ENCODE measurements at regions of chr21 and their contacts with region 1.

Region 1: DNA sequence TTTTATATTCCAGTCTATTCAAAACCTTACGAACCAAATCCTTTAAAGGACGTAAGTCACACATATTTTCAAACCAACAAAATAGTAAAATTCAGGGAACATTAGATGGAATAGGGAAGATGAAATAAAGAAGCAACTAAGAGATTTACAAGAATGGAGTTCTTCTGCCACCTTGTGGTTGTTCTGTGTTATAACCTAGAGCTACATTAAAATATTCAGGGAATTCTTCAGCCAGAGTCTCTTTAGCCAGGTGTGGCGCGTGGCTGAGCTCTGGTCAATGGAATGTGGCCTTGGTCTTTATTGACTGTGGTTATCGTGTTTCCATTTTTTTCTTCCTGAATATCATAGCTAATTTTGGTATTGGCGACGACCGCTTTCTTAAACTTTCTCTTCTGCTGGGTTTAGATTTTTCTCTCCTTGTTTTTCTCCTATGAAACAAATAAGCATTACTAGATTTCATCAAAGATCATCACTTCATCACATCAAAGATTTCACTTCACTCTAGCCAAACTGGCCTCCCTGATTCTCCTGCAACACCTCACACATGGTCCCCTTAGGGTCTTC is 221.3 kb downstream of the MRPL39 start:
- DNase-seq: no peak
- H3K4me3 ChIP-seq: no peak overlapping the region
- H3K27me3 ChIP-seq: no peaks in the 10 kb centered on the region
- CTCF ChIP-seq: peak; percentile 64

Region 2: DNA sequence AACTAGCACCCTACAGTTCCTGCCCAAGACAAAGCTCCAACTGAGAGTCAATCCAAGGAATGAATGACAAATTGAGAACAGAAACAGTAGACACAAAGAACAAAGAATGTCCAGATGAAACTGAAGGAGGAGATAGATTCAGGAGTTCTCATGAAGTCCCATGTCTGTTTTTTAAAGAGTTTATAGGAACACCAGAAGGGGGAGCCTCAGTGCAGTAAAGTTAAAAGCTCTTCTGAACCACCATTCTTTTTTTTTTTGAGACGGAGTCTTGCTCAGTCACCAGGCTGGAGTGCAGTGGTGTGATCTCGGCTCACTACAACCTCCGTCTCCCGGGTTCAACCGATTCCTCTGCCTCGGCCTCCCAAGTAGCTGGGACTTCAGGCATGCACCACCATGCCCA is 102.3 kb before region 1 on chr21:
- CTCF ChIA-PET with region 1: interaction called, 11 read pairs
- POLR2A ChIA-PET with region 1: no interaction called
- DNase-seq: peak; percentile 8
- H3K4me3 ChIP-seq: no peak overlapping the region
- H3K27me3 ChIP-seq: no peaks in the 10 kb centered on the region
- CTCF ChIP-seq: peak; percentile 54

Region 3: GRCh38 chr21:25342816-25343215 is 43.2 kb before region 1 on chr21:
- CTCF ChIA-PET with region 1: interaction called, 10 read pairs
- POLR2A ChIA-PET with region 1: no interaction called
- DNase-seq: peak; percentile 34
- H3K4me3 ChIP-seq: no peak overlapping the region
- H3K27me3 ChIP-seq: no peaks in the 10 kb centered on the region
- CTCF ChIP-seq: no peak

Region 4: GRCh38 chr21:25350056-25350455 is 35.9 kb before region 1 on chr21:
- CTCF ChIA-PET with region 1: interaction called, 29 read pairs
- POLR2A ChIA-PET with region 1: no interaction called
- DNase-seq: no peak
- H3K4me3 ChIP-seq: no peak overlapping the region
- H3K27me3 ChIP-seq: no peaks in the 10 kb centered on the region
- CTCF ChIP-seq: peak; percentile 74

Region 5: DNA sequence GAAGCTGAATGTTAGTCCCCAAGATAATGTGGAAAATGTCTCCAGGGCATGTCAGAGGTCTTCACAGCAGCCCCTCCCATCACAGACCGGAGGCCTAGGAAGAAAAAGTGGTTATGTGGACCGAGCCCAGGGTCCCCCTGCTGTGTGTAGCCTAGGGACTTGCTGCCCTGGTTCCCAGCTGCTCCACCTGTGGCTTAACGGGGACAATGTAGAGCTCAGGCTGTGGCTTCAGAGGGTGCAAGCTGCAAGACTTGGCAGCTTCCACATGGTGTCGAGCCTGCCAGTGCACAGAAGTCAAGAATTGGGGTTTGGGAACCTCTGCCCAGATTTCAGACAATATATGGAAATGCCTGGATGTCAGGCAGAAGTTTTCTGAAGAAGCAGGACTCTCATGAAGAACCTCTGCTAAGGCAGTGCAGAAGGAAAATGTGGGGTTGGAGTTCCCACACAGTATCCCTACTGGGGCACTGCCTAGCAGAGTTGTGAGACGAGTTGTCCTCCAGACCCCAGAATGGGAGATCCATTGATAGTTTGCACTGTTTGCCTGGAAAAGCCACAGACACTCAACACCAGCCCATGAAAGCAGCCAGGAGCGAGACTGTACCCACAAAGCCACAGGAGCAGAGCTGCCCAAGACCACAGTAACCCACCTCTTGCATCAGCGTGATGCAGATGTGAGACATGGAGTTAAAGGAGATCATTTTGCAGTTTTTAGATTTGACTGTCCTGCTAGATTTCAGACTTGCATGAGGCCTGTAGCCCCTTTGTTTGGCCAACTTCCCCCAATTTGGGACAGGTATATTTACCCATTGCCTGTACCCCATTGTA is 16.4 kb after region 1 on chr21:
- CTCF ChIA-PET with region 1: no interaction called
- POLR2A ChIA-PET with region 1: no interaction called
- DNase-seq: no peak
- H3K4me3 ChIP-seq: no peak overlapping the region
- H3K27me3 ChIP-seq: no peaks in the 10 kb centered on the region
- CTCF ChIP-seq: no peak